Dorsolateral prefrontal cortex (tissue), 120 donors: ENCODE measurements at regions of chr1 and their contacts with region 1.

Region 1: GRCh38 chr1:231691618-231692259 is 65.1 kb downstream of the DISC1 start:
- DNase-seq: peak in 8 of 10 donors; percentile 34 to 68 (median 52)
- H3K4me3 ChIP-seq: no peak overlapping the region
- H3K27ac ChIP-seq: peak overlapping the region in 17 of 59 donors; percentile 7 to 59 (median 35)
- H3K27me3 ChIP-seq: no peaks in the 10 kb centered on the region
- CTCF ChIP-seq: peak in 55 of 56 donors; percentile 40 to 85 (median 68)

Region 2: GRCh38 chr1:231626535-231626945 is 65.2 kb before region 1 on chr1 and contains the start of gene DISC1:
- intact Hi-C with region 1: loop called in 1 of 2 experiments (anchors 5 kb)
- DNase-seq: peak; percentile 18 to 80 (median 66)
- H3K4me3 ChIP-seq: peak within 1 kb of the TSS; percentile 44 to 92 (median 81)
- H3K27ac ChIP-seq: peak within 1 kb of the TSS; percentile 34 to 96 (median 87)
- H3K27me3 ChIP-seq: peaks cover 0 to 5% (median 0%) of the 10 kb centered on the region in 45 donors
- CTCF ChIP-seq: peak in 1 of 56 donors; percentile 8
- total RNA-seq, gene DISC1: 6.5 to 25.1 (median 12.5) TPM

Region 3: DNA sequence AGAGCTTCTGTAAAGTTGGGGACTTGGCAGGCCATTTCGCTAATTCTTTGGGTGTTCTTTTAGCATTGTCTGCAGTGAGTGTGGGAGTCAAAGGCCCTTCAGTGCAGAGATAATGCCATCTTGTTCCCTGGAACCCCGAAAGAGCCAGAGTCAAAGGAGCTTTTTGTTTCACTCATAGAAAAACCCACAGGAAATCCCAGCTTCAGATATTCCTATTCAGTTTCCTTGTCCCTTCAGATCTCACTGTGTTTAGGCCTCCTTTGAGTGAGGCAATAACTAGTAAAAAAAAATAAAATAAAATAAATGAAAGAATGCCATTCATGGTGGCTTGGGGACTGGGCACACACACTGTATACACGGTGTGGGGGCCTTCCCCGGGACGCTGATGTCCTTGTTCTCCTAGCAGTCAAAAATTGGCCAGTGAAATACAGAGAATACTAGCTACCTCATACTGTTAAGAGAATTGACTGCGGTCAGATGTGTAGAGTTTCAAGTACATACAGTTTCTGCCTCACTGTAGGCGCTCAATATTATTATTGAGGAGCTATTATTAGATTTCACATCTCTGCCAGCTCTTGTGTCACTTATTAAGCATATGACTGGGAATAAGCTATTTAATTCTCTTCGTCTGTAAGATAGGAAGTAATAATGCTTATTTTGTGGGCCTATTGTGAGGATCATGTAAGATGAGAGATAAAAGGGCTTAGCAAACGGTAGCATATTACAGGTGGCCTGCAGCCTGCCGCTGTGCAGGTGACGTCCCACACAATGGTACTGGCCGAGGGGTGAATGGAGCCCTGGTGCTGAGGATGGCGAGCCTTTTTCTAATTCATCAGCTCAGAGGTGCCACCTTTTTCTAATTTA is 48.4 kb before region 1 on chr1:
- intact Hi-C with region 1: loop called in 1 of 2 experiments (anchors 5 kb)
- DNase-seq: peak in 2 of 10 donors; percentile 44 to 55
- H3K4me3 ChIP-seq: peak overlapping the region in 29 of 59 donors; percentile 1 to 52 (median 16)
- H3K27ac ChIP-seq: peak overlapping the region; percentile 40 to 95 (median 86)
- H3K27me3 ChIP-seq: no peaks in the 10 kb centered on the region
- CTCF ChIP-seq: peak in 3 of 56 donors; percentile 4 to 28 (median 7)